ENCODE measurements at regions of chr3 and their contacts with region 1.

Region 1: DNA sequence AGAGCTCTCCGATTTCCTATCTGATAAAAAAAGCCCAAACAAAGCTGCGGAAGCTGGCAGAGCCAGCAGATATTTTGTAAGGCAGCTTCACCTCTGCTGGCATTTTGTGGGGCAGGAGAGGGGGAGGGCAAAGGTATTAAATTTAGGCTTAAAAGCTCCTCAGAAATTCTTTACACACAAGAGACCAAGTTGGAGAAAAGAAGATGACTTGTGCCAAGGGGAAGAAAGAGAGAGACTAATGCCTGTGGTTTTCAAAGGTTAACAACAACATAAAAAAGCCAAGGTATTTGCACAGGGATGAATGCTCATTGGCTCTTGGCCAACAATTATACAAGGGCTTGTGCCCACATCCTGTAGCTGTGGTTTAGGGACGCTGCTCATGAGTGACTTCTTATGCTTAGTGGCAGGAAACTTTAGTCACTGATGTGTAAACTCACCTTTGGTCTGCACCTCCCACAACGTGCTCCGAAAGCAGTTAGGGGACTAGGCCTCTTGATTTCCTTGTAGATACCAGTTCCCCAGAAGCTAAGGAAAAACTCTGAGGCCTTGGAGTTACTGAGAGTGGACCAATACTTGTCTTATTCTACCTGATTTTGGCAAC is 152.9 kb downstream of the TPRG1 start:
- DNase-seq: peak; percentile 93
- H3K4me3 Mint-ChIP-seq: peak overlapping the region; percentile 46
- H3K27ac Mint-ChIP-seq: peak overlapping the region; percentile 93
- H3K4me1 Mint-ChIP-seq: peaks cover 58% of the 10 kb centered on the region
- H3K27me3 Mint-ChIP-seq: no peaks in the 10 kb centered on the region

Region 2: DNA sequence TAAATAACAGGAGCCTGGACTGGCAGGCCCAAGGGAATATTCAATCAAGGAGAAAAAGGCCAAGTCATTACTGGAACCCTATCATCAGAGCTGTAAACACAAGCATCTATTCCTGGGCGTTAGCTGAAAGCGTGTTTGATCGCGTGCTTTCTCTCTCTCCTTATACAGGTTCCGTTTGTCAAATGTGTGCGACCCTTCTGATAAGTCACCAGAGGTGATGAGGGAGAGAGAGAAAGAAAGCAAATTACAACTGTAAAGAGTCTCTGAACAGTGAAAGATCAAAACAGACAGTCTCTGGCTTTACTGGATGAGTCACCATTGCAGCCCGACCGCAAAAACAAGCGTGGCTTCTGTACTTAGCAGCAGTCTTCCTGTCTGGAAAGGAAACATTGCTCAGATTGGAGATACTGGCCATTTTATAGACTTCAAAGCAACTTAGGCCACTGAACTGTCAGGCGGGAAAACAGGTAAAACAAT is 192.4 kb before region 1 on chr3:
- CTCF ChIA-PET with region 1: no interaction called
- POLR2A ChIA-PET with region 1: no interaction called
- intact Hi-C with region 1: loop called (anchors 2 kb)
- DNase-seq: peak; percentile 90
- H3K4me3 Mint-ChIP-seq: peak overlapping the region; percentile 50
- H3K27ac Mint-ChIP-seq: peak overlapping the region; percentile 83
- H3K4me1 Mint-ChIP-seq: peaks cover 26% of the 10 kb centered on the region
- H3K27me3 Mint-ChIP-seq: no peaks in the 10 kb centered on the region

Region 3: DNA sequence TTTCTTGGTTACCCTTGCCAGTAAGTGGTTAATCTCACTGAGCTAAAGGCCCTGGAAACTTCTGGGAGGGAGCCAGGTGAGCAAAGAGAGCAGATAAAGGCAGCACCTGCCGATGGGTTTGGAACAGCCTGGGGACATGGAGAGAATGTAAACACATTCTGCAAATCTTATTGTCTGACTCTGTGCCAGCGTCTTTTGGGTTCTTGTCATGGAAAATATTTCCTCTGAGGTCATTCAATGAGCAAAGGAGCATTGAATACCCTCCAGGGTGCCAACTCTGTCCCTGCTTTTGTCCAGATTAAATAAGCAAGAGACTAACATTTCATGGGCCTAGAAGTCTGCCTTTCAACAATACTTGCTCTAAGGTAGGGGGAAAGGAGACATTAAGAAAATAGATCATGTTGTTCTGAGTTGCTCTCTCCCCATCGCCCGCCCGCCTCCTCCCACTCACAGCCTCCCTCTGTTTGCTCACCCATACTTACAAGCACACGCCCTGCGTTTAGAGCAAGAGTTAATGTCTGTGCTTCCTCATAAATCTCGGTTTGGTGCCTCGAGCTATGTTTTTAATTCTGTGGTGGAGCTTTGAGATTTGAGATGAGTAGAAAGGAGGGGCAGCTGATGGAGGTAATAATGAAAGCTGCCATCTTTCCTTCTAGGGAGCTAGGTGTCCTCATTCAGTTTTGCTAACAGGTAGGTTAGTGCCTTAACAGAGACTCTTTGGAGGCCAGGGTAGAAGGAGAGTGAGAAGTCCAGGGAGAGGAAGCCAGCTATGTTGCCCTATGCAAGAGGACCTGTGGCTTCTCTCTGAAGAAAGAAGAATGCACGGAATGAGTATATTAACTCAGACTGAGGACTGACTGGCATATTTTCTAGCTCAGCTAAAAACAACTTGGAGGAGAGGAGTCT is 19.9 kb before region 1 on chr3:
- CTCF ChIA-PET with region 1: interaction called, 5 read pairs
- POLR2A ChIA-PET with region 1: interaction called, 27 read pairs
- intact Hi-C with region 1: loop called (anchors 1 kb)
- DNase-seq: peak; percentile 46
- H3K4me3 Mint-ChIP-seq: no peak overlapping the region
- H3K27ac Mint-ChIP-seq: peak overlapping the region; percentile 89
- H3K4me1 Mint-ChIP-seq: peaks cover 49% of the 10 kb centered on the region
- H3K27me3 Mint-ChIP-seq: no peaks in the 10 kb centered on the region

Region 4: DNA sequence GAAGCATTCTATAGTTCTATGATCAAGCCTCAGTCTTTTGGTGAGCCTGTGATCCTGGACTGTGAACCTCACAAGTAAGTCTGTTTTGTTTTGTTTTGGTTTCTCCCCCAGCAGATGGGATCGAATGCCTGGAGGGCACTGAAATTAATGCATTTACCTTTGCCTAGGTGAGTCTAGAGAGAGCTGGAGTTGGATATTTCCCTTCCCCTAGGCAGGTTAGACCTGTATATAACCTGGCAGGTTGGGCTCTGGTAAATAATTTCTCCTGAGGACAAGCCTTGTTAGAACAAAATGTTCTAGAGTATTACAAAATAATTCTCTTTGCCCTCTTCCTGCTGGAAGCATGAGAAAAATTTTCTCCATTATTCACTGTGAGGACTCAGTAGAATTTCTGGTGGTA is 59.0 kb after region 1 on chr3:
- CTCF ChIA-PET with region 1: no interaction called
- POLR2A ChIA-PET with region 1: no interaction called
- intact Hi-C with region 1: no loop called
- DNase-seq: no peak
- H3K4me3 Mint-ChIP-seq: no peak overlapping the region
- H3K27ac Mint-ChIP-seq: no peak overlapping the region
- H3K4me1 Mint-ChIP-seq: no peaks in the 10 kb centered on the region
- H3K27me3 Mint-ChIP-seq: no peaks in the 10 kb centered on the region

Region 5: GRCh38 chr3:189394599-189395121 is 70.0 kb after region 1 on chr3:
- CTCF ChIA-PET with region 1: no interaction called
- POLR2A ChIA-PET with region 1: no interaction called
- intact Hi-C with region 1: loop called (anchors 2 kb)
- DNase-seq: no peak
- H3K4me3 Mint-ChIP-seq: no peak overlapping the region
- H3K27ac Mint-ChIP-seq: no peak overlapping the region
- H3K4me1 Mint-ChIP-seq: peaks cover 20% of the 10 kb centered on the region
- H3K27me3 Mint-ChIP-seq: no peaks in the 10 kb centered on the region

Region 6: GRCh38 chr3:189841473-189842210 is 517.0 kb after region 1 on chr3:
- CTCF ChIA-PET with region 1: no interaction called
- POLR2A ChIA-PET with region 1: no interaction called
- intact Hi-C with region 1: loop called (anchors 10 kb)
- DNase-seq: no peak
- H3K4me3 Mint-ChIP-seq: no peak overlapping the region
- H3K27ac Mint-ChIP-seq: no peak overlapping the region
- H3K4me1 Mint-ChIP-seq: peaks cover 12% of the 10 kb centered on the region
- H3K27me3 Mint-ChIP-seq: peaks cover 3% of the 10 kb centered on the region

Measured in activated CD4-positive, alpha-beta memory T cell treated with anti-CD3 and anti-CD28 coated beads for 36 hours (primary cell).